Dendritic cell treated with granulocyte-macrophage colony-stimulating factor and Interleukin-4, amounts not matched to agents 40 ng/mL and 50 ng/mL, for 4 days (primary cell): ENCODE measurements at regions of chr2 and their contacts with region 1.

Region 1: DNA sequence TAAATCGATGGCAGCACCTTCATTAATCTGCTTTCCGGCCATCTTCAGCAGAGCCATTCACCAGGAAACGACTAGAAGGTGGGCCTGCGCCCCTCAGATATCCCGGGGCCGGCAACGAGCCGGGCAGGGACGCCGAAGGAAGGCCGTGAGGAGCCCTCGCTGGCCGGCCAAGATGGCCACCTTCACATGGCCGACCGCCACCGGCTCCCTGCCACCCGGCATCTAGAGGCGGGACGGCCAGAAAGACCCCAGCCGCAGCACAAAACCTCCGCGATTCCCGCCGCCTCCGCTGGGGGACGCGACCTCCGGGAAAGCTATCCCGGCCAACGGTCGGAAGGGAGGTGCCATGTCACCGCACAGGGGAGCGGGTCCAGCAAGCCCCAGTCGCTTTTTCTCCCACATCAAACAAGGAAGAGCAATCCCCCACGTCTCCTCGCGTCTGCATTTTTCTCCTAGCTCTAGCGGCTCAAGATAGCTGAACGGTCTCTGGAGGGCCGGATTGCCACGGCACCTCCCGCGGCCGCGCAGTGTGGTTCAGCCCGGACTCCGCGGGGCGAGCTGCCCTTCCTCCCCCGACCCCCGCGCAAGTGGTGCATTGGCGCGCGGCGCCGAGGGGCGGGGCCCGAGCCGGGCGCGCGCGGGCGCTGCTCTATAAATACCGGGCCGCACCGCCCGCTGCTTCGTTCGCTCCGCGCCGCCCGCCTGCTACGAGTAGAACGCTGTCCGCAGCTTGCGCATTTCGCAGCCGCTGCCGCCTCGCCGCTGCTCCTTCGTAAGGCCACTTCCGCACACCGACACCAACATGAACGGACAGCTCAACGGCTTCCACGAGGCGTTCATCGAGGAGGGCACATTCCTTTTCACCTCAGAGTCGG is at the start of gene MAT2A:
- H3K4me3 Mint-ChIP-seq: peak within 1 kb of the TSS; percentile 96
- H3K27ac Mint-ChIP-seq: peak within 1 kb of the TSS; percentile 99
- H3K4me1 Mint-ChIP-seq: peaks cover 56% of the 10 kb centered on the region
- H3K27me3 Mint-ChIP-seq: no peaks in the 10 kb centered on the region

Region 2: DNA sequence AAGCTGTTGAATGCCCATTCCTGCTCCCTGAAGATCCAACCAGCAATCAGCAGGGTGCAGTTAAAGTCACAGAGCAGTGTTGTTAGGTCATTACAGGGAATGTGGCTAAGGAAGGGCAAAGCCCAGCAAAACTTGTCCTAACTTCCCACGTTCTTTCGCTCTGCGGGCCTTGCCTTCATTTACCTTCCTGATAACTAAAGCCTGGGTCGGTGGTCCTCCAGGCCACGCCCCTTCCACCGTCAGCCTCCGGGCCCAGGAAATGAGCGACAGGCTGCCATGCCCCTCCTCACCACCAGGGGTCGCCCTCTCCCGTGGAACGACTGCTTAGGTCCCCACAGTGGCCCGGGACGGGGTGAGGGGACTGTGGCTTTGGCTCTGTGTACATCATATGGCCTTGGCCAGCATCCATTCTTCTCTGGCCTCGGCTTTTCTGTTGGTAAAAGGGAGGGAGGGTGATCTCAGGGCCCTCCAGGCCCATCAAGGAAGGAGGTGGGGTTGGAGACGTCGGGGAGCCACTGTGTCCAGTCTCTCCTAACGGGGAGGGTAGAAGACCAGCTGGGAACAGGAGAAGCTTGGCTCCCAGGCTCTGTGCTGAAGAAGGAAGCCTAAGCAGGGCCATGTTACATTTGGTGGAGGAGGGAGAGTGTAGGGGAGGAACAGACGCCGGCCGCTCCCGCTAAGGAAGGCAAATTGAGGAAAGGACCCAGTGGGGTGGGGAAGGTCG is 118.0 kb before region 1 on chr2:
- intact Hi-C with region 1: loop called (anchors 1 kb)
- H3K4me3 Mint-ChIP-seq: peak overlapping the region; percentile 32
- H3K27ac Mint-ChIP-seq: peak overlapping the region; percentile 85
- H3K4me1 Mint-ChIP-seq: peaks cover 69% of the 10 kb centered on the region
- H3K27me3 Mint-ChIP-seq: no peaks in the 10 kb centered on the region

Region 3: GRCh38 chr2:85437488-85438284 is 101.0 kb before region 1 on chr2:
- intact Hi-C with region 1: loop called (anchors 2 kb)
- H3K4me3 Mint-ChIP-seq: peak overlapping the region; percentile 69
- H3K27ac Mint-ChIP-seq: peak overlapping the region; percentile 98
- H3K4me1 Mint-ChIP-seq: peaks cover 70% of the 10 kb centered on the region
- H3K27me3 Mint-ChIP-seq: no peaks in the 10 kb centered on the region

Region 4: GRCh38 chr2:85504778-85505323 is 33.9 kb before region 1 on chr2:
- intact Hi-C with region 1: loop called (anchors 5 kb)
- H3K4me3 Mint-ChIP-seq: no peak overlapping the region
- H3K27ac Mint-ChIP-seq: peak overlapping the region; percentile 86
- H3K4me1 Mint-ChIP-seq: peaks cover 89% of the 10 kb centered on the region
- H3K27me3 Mint-ChIP-seq: no peaks in the 10 kb centered on the region